ENCODE measurements at regions of chr20 and their contacts with region 1.

Region 1: DNA sequence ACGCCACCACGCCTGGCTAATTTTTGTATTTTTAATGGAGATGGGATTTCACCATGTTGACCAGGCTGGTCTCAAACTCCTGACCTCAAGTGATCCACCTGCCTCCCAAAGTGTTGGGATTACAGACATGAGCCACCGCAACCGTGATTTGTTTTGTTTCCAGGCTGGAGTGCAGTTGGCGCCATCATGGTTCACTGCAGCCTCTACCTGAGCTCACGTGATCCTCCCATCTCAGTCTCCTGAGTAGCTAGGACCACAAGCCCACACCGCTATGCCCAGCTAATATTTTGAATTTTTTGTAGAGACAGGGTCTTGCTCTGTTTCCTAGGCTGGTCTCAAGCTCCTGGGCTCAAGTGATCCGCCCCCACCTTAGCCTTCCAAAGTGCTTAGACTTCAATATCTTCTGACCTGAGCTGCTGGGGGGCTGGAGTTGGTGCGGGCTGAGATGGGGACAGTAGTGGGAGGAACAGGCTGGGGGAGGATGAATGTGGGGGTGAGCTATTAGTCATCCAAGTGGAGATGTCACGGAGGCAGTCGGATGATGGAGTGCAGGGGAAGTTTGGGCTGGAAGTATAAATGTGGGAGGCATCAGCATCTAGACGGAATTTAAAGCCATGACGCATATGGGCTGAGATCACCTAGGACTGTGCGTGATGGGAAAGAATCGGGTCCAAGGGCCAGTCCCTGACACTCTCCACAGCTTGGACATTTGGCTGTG is 23.1 kb upstream of the ZMYND8 start:
- DNase-seq: no peak
- H3K27ac ChIP-seq: peak overlapping the region; percentile 67
- CTCF ChIP-seq: no peak

Region 2: GRCh38 chr20:46757754-46758678 is 621.6 kb before region 1 on chr20:
- CTCF ChIA-PET with region 1: interaction called, 40 read pairs
- POLR2A ChIA-PET with region 1: no interaction called
- DNase-seq: peak; percentile 87
- H3K27ac ChIP-seq: no peak overlapping the region
- CTCF ChIP-seq: peak; percentile 100

Region 3: DNA sequence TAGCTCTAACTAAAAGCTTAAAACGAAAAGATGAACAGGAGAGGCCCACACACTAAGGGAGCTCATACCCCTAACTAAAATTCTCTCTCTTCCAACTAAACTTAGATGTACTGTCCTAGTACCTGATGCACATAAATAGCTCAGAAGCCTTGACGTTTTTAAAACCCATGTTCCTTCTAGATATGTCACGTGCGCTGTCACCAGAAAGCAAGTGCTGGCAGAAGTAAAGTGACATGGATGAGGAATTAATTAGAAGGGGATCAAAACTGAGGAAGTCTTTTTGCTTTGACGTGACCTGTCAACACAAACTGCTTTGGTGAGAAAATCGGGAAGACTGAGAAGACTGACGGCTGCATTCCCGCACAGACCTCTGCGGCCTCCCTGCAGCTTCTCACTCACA is 165.6 kb before region 1 on chr20:
- CTCF ChIA-PET with region 1: interaction called, 11 read pairs
- POLR2A ChIA-PET with region 1: no interaction called
- DNase-seq: no peak
- H3K27ac ChIP-seq: peak overlapping the region; percentile 11; the same call in 1 of the 2 replicates
- CTCF ChIP-seq: no peak

Region 4: DNA sequence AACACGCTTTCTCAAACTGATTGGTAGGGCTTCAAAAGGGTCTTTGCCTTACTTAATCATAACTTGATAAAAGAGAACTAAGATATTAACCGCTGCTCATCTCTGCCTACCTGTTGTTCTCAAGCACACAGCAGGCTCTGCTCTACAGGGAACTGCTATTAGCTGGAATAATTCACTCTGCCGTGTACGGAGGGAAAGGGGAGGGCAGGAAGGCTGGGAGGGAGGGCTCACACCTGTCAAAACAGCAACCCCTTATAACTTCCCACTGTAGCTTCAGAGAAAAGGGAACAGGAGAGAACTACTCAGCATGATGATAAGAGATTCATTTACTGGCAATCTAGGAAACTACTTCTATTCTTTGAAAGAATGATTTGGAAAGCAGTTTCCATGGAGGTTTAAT is 98.2 kb before region 1 on chr20:
- CTCF ChIA-PET with region 1: interaction called, 387 read pairs
- POLR2A ChIA-PET with region 1: no interaction called
- DNase-seq: no peak
- H3K27ac ChIP-seq: no peak overlapping the region
- CTCF ChIP-seq: no peak

Region 5: GRCh38 chr20:47317127-47317895 is 62.3 kb before region 1 on chr20:
- CTCF ChIA-PET with region 1: interaction called, 26 read pairs
- POLR2A ChIA-PET with region 1: interaction called, 4 read pairs
- DNase-seq: peak; percentile 100
- H3K27ac ChIP-seq: peak overlapping the region; percentile 100
- CTCF ChIP-seq: no peak

Region 6: GRCh38 chr20:47455133-47456040 is 75.8 kb after region 1 on chr20:
- CTCF ChIA-PET with region 1: interaction called, 10 read pairs
- POLR2A ChIA-PET with region 1: interaction called, 3 read pairs
- DNase-seq: no peak
- H3K27ac ChIP-seq: peak overlapping the region; percentile 74
- CTCF ChIP-seq: no peak

Region 7: DNA sequence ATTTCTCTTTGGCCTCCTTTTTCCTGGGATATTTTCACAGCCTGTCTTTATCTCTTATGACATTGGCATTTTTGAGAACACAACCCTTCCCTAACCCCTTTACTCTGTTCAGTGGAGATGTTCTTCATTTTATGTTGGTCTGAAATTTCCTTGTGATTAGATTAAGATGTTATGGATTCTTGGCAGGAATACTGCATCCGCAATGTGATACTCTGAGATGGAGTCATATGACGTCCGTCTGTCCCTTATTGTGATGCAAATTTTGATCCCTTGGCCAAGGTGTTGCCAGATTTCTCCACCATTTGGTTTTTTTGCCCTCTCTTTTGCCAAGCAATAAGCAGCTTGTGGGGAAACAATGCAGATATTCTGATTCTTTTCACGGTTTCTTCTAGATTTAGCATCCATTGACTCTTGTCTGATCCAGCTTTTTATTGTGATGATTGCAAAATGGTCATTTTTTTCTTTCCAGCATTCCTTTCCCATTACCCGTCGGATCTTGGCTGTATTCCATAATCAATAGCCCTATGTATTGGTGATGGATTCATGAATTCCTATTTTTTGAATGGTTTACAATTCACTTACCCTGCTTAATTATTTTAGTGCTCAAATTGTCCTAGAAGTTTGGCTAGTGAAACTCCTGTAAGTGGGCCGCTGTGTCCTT is 207.2 kb after region 1 on chr20:
- CTCF ChIA-PET with region 1: no interaction called
- POLR2A ChIA-PET with region 1: no interaction called
- DNase-seq: no peak
- H3K27ac ChIP-seq: no peak overlapping the region
- CTCF ChIP-seq: no peak

Region 8: DNA sequence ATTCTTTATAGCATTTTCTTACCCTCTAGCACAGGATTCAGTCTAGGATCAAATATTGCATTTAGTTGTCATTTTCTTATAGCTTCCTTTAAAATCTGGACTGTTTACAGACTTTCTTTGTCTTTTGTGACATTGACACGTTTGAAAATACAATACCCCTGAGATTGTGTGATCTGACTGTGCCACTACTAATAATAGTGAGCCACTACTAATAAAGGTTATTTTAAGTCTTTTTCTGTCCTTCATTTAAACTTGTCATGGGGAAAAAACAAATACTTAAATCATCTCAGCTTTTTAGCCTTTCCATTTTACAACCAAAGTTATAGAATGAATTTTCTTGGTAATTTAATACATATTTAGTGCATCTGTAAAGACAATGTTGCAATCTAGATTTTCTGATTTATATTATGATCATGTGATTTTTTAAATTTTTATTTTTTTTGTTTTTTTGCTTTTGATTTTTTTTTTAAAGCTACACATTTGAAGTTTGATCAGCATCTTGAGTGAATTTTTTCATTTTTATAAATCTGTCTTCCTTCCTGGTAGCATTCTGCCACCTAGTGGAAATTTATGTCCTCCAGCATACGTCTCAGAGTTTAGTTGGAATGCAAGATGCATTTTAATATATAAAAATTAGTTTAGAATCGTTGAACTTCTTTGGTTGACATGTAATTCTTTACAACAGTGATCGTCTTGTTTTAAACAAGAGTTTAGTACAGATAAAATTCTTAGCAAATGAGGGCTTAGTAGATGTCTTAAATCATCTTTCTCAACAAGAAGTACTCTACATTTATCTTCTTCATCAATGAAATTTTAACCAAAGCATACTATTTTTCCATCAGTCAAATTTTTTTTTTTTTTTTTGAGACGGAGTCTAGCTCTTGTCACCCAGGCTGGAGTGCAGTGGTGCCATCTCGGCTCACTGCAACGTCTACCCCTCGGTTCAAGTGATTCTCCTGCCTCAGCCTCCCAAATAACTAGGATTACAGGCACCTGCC is 241.5 kb after region 1 on chr20:
- CTCF ChIA-PET with region 1: interaction called, 21 read pairs
- POLR2A ChIA-PET with region 1: no interaction called
- DNase-seq: peak; percentile 64
- H3K27ac ChIP-seq: no peak overlapping the region
- CTCF ChIP-seq: peak; percentile 99

Measured in RWPE1 (cell line).